Activated CD8-positive, alpha-beta T cell treated with anti-CD3 and anti-CD28 coated beads, Interleukin-2, amount 10 ng/mL, durations not matched to agents 7 days and 5 days (primary cell): ENCODE measurements at regions of chr15 and their contacts with region 1.

Region 1: DNA sequence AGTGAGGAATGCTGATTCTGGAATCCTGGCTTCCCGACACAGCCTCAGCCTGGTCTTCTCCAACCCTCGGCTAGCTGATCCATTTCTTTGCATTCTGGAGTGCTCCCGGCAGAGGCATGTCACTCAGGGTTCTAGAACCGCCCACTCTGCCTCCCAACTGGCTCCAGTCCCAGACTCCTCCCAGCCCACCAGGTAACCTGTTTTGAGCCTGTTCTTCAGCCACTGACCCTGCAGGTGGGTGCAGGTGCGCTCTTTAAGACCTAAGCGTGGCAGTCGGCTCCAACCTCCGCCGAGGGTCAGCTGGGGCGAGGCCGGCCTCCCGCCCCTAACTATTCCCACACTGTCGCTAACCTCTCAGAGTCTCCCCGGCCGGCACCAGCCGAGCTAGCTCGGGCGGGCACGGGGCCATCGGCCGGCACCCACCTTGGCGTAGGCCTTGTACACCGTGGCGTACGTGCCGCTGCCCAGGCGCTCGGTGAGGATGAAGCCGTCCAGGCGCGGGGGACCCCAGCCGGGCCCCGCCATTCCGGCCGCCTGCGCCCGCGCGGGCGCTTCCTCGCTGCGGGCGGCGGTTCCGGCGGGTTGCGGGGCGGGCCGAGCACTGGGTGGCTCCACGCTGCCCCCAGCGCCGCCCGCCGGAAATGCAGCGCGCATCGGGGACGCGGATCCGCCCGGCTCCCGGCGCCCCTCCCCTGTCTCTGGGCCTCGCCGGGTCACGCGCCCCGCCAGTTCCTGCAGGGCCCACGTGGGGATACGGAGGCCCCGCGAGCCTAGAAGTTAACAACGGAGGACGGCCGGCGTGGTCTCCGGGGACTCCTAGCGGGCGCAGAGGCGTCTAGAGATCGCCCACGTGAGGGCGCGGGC is at the start of gene ULK3:
- DNase-seq: peak; percentile 94
- ATAC-seq: peak; percentile 87
- H3K4me3 Mint-ChIP-seq: peak within 1 kb of the TSS; percentile 89
- H3K27ac Mint-ChIP-seq: peak within 1 kb of the TSS; percentile 93
- H3K4me1 Mint-ChIP-seq: peaks cover 49% of the 10 kb centered on the region
- H3K27me3 Mint-ChIP-seq: no peaks in the 10 kb centered on the region
- total RNA-seq, gene ULK3: 56.9 to 58.0 TPM

Region 2: DNA sequence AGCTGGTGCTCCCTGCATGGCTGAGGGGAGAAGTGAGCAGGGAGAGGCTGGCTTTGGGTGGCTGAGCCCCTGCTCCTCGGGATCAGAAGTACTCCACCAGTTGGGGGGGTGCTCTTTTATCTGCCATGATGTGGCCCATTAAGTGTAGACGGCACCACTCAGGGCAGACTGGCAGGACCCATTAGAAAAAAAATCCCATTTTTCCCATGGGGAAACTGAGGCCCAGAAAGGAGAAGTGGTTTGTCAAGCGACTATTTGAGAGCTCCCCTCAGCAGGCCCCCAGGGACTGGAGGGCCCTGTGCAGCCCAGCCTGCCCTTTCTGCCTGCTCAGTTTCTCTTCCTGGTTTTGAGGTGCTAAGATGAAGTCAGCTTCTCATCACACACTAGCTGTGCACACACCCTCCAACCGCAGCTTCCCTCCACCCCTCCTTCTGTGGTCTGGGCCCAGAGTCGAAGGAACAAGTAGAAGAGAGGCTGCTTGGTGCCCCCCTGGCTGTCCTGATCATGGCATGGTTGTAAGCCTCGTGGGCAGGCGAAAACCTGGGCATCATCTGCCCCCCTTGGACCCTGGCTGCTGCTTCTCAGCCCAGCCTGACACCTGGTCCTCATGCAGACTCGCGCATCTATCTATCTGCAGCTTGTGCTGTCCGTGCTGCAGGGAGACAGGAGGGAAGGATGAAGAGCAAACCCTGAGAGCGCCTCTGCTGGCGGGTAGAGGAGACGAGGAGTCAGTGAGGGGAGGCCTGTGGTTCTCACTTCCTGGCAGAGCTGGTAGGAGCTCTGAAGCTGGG is 55.4 kb before region 1 on chr15:
- CTCF ChIA-PET with region 1: interaction called, 16 read pairs
- POLR2A ChIA-PET with region 1: interaction called, 5 read pairs
- DNase-seq: peak; percentile 97
- ATAC-seq: peak; percentile 72
- H3K4me3 Mint-ChIP-seq: peak overlapping the region; percentile 90
- H3K27ac Mint-ChIP-seq: peak overlapping the region; percentile 99
- H3K4me1 Mint-ChIP-seq: peaks cover 66% of the 10 kb centered on the region
- H3K27me3 Mint-ChIP-seq: no peaks in the 10 kb centered on the region

Region 3: DNA sequence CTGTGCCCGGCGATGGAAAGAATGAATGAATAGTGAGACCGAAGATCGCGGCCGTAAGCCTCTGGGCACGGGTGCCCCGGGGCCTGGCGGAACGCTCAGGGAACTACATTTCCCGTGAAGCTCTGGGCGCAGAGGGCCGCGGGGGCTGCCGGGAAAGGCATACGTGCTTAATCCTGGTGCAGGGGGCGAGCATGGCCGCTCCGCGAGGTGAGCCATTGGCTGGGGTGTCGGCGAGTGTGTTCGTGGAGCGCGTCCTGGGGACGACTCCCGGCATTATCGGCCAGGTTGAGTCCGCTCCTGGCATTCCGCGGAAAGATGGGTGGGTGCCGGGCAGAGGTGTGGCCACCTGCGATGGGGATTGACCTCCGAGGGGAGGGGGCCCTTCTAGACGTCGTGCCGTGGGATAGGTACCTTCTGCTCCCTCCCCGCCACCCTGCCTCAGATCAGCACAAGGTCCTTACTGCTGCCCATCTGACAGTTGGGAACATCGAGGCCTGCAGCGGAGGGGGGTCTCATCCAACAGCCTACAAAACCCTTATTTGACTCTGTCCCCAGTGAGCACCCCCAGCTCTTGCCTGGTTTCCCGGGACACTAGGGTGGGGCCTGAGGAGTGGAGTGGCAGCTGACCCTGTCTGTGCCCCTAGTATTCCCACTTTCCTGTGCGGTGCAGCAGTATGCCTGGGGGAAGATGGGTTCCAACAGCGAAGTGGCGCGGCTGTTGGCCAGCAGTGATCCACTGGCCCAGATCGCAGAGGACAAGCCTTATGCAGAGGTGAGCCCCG is 47.3 kb after region 1 on chr15 and contains the start of gene MPI:
- CTCF ChIA-PET with region 1: interaction called, 11 read pairs
- POLR2A ChIA-PET with region 1: interaction called, 3 read pairs
- DNase-seq: peak; percentile 90
- ATAC-seq: peak; percentile 97
- H3K4me3 Mint-ChIP-seq: peak within 1 kb of the TSS; percentile 91
- H3K27ac Mint-ChIP-seq: peak within 1 kb of the TSS; percentile 89
- H3K4me1 Mint-ChIP-seq: peaks cover 50% of the 10 kb centered on the region
- H3K27me3 Mint-ChIP-seq: no peaks in the 10 kb centered on the region
- total RNA-seq, gene MPI: 55.7 to 56.7 TPM